Colonic mucosa (tissue), 4 donors: ENCODE measurements at regions of chr4 and their contacts with region 1.

Region 1: DNA sequence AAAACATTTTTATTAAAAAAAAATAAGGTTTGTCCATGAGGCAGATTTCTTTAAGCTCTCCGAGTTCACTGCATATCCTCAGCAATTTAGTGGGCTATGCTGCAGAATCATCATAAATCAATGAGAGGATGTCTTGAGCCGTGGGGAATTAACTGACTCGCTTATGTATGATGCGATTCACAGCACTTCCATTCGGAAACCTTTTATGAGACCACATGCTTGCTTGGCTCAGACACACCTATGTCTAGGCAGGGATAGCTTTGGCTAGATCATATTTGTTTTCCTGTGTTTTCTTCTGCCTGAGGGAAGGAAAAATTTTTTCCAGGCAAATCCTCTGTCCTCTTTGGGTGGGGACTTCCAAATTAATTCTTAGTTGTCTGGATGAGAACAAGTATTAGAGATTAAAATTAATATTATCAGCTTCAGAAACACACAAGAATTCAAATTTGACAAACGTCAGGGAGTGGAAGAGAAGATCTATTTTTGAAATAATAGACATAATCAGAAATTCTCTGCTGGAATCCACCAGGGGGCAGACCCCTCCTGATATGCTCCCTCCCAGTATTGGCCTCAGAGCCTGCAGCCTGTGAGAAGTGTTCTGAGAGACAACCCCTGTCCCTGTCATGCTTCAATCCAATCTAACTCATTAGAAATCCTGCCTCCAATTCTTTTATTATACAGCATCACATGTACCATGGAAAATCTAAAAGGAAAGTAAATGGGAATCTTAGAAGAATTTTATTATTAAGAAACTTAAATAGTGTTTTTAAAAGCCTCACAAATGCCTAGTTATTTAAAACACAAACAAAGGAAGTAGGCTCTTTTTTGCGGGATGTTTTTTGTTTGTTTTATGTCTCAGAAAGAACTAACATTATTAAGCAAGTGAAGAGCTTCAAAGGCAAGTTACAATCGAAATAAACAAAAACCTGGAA is 345.1 kb upstream of the TACR3 start:
- DNase-seq: peak; percentile 25
- H3K4me3 ChIP-seq: no peak overlapping the region
- H3K27ac ChIP-seq: no peak overlapping the region
- H3K4me1 ChIP-seq: no peaks in the 10 kb centered on the region
- H3K27me3 ChIP-seq: no peaks in the 10 kb centered on the region
- CTCF ChIP-seq: peak; percentile 40

Region 2: GRCh38 chr4:104163820-104164219 is 98.9 kb after region 1 on chr4:
- intact Hi-C with region 1: no loop called
- DNase-seq: no peak
- H3K4me3 ChIP-seq: no peak overlapping the region
- H3K27ac ChIP-seq: no peak overlapping the region
- H3K4me1 ChIP-seq: no peaks in the 10 kb centered on the region
- H3K27me3 ChIP-seq: no peaks in the 10 kb centered on the region
- CTCF ChIP-seq: no peak

Region 3: GRCh38 chr4:104294811-104295210 is 229.9 kb after region 1 on chr4:
- intact Hi-C with region 1: no loop called
- DNase-seq: no peak
- H3K4me3 ChIP-seq: no peak overlapping the region
- H3K27ac ChIP-seq: no peak overlapping the region
- H3K4me1 ChIP-seq: no peaks in the 10 kb centered on the region
- H3K27me3 ChIP-seq: no peaks in the 10 kb centered on the region
- CTCF ChIP-seq: no peak

Region 4: DNA sequence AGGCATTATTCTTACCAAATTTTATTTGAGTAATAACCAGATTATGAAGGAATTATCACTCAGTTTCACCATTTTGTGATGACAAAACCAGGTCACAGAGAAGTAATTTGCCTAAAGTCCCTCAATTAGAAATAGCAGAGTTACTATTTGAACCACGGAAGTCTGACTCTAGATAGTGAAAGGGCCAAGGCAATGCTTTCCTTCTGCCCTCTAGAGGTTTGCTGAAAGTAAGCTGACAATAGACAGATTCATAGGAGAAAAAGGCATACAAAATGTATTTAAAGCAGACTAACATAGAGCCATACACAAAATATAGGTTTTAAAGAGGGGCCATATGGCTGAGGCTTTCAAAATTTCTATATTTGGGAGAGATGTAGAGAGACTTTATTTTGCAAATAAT is 386.7 kb after region 1 on chr4:
- intact Hi-C with region 1: loop called (anchors 5 kb)
- DNase-seq: no peak
- H3K4me3 ChIP-seq: no peak overlapping the region
- H3K27ac ChIP-seq: no peak overlapping the region
- H3K4me1 ChIP-seq: no peaks in the 10 kb centered on the region
- H3K27me3 ChIP-seq: no peaks in the 10 kb centered on the region
- CTCF ChIP-seq: no peak

Region 5: GRCh38 chr4:104860238-104861123 is 795.6 kb after region 1 on chr4:
- intact Hi-C with region 1: loop called (anchors 5 kb)
- DNase-seq: peak; percentile 69
- H3K4me3 ChIP-seq: no peak overlapping the region
- H3K27ac ChIP-seq: no peak overlapping the region
- H3K4me1 ChIP-seq: no peaks in the 10 kb centered on the region
- H3K27me3 ChIP-seq: no peaks in the 10 kb centered on the region
- CTCF ChIP-seq: peak; percentile 79